ENCODE measurements at regions of chr16 and their contacts with region 1.

Region 1: DNA sequence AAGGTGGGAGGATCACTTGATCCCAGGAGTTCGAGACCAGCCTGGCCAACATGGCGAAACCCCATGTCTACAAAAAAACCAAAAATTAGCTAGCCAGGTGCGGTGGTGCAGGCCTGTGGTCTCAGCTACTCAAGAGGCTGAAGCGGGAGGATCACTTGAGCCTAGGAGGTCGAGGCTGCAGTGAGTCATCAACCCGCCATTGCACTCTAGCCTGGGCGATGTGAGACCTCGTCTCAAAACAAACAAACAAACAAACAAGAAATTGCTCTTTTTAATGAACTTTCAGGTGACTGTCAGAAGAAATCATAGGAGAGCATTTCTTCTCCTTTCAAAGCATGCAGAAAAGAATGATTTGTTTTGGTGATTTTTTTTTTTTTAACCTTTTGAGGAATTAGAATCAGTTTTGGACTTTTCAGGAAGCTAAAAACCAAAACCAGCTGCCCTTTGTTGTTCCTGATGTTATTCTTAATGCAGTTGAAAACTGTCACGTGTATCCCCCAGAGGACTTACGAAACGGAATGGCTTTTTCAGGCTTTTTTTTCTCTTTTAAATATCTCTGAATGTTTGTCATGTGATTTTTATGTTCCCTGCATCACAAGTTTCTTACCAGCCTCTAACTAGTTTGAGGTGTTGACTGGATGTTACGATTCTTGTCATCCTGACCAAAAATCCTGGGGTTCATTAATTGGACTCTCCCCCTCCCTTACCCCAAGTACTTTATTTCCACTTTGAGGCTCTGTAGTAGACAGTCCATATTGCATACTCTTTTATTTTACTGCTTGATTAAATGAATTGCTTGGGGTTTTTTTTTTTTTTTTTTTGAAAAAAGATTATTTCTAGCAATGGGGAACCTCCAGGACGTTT is 34.1 kb downstream of the SNX29 start:
- DNase-seq: no peak
- ATAC-seq: peak; percentile 53
- H3K4me3 Mint-ChIP-seq: peak overlapping the region; percentile 63
- H3K27ac Mint-ChIP-seq: peak overlapping the region; percentile 88
- H3K4me1 Mint-ChIP-seq: peaks cover 50% of the 10 kb centered on the region
- H3K27me3 Mint-ChIP-seq: no peaks in the 10 kb centered on the region
- CTCF ChIP-seq: no peak

Region 2: DNA sequence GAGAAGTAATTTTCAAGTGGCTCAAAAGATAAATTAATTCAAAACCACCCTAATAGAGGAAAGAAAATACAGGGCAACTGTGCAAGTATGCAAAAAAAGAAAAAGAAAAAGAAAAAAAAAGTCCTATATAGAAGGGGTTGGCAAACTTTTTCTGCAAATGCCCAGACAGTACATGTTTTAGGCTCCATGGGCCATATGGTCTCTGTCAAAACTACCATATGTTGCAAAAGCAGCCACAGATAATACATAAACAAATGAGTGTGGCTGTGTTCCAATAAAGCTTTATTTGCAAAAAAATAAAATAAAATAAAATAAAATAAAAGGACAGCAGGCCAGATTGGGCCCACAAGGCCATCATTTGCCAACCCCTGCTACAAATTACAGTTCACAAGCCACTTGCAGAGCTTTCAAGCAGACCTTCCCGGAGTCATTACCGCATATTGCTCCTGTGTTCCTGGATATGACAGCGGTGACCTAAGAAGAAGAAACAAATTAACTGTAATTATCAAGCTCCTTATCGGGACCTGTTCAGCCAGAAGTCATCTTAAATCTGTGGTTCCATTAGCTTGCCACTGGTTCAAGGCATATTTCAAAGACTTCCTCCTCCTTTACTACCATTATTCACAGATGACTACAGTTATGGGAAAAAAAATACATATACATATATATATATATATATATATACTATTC is 229.5 kb before region 1 on chr16:
- CTCF ChIA-PET with region 1: no interaction called
- POLR2A ChIA-PET with region 1: no interaction called
- intact Hi-C with region 1: no loop called
- DNase-seq: no peak
- ATAC-seq: no peak
- H3K4me3 Mint-ChIP-seq: peak overlapping the region; percentile 46
- H3K27ac Mint-ChIP-seq: peak overlapping the region; percentile 98
- H3K4me1 Mint-ChIP-seq: peaks cover 55% of the 10 kb centered on the region
- H3K27me3 Mint-ChIP-seq: no peaks in the 10 kb centered on the region
- CTCF ChIP-seq: no peak

Region 3: GRCh38 chr16:11994143-11995119 is 16.2 kb before region 1 on chr16:
- CTCF ChIA-PET with region 1: no interaction called
- POLR2A ChIA-PET with region 1: no interaction called
- intact Hi-C with region 1: loop called (anchors 2 kb)
- DNase-seq: no peak
- ATAC-seq: peak; percentile 61
- H3K4me3 Mint-ChIP-seq: peak overlapping the region; percentile 15
- H3K27ac Mint-ChIP-seq: peak overlapping the region; percentile 50
- H3K4me1 Mint-ChIP-seq: peaks cover 79% of the 10 kb centered on the region
- H3K27me3 Mint-ChIP-seq: no peaks in the 10 kb centered on the region
- CTCF ChIP-seq: no peak

Region 4: GRCh38 chr16:12026741-12027490 is 16.3 kb after region 1 on chr16:
- CTCF ChIA-PET with region 1: no interaction called
- POLR2A ChIA-PET with region 1: interaction called, 3 read pairs
- intact Hi-C with region 1: loop called (anchors 2 kb)
- DNase-seq: no peak
- ATAC-seq: no peak
- H3K4me3 Mint-ChIP-seq: no peak overlapping the region
- H3K27ac Mint-ChIP-seq: peak overlapping the region; percentile 57
- H3K4me1 Mint-ChIP-seq: peaks cover 71% of the 10 kb centered on the region
- H3K27me3 Mint-ChIP-seq: no peaks in the 10 kb centered on the region
- CTCF ChIP-seq: no peak

Measured in activated B cell treated with CpG ODN at 0.5 μM for 24 hours (primary cell).